ENCODE measurements at regions of chr11 and their contacts with region 1.

Region 1: DNA sequence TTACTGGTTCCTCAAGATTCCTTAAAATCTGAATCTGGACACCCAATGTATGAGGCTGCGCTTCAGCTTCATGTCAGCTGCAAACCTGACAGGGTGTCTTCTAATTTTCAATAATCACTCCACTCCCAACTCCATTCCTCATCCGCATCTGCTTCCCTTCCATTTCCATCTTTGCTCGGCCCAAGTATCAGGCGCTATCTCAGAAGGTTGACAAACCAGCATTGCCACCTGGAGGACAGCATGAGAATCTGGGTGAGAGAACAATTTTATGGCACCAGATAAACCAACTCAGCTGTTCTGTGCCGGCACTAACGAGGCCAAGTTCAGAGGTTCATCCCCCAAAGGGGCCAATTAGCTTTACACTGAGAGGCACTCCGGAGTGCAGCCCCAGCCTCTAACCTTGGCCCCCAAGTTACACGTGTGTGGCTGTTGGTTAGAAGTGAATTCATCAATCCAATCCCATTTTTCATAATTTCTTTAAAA is 79.1 kb upstream of the LMO2 start:
- DNase-seq: peak; percentile 96
- H3K4me3 ChIP-seq: no peak overlapping the region
- H3K27ac ChIP-seq: peak overlapping the region; percentile 31
- H3K4me1 ChIP-seq: peaks cover 26% of the 10 kb centered on the region
- H3K27me3 ChIP-seq: no peaks in the 10 kb centered on the region
- CTCF ChIP-seq: peak; percentile 99

Region 2: GRCh38 chr11:33280411-33280810 is 690.6 kb before region 1 on chr11:
- CTCF ChIA-PET with region 1: no interaction called
- POLR2A ChIA-PET with region 1: no interaction called
- intact Hi-C with region 1: no loop called
- DNase-seq: no peak
- H3K4me3 ChIP-seq: no peak overlapping the region
- H3K27ac ChIP-seq: no peak overlapping the region
- H3K4me1 ChIP-seq: no peaks in the 10 kb centered on the region
- H3K27me3 ChIP-seq: no peaks in the 10 kb centered on the region
- CTCF ChIP-seq: no peak

Region 3: GRCh38 chr11:33835143-33835878 is 135.7 kb before region 1 on chr11:
- CTCF ChIA-PET with region 1: interaction called, 12 read pairs
- POLR2A ChIA-PET with region 1: no interaction called
- intact Hi-C with region 1: loop called (anchors 1 kb)
- DNase-seq: peak; percentile 89
- H3K4me3 ChIP-seq: peak overlapping the region; percentile 24
- H3K27ac ChIP-seq: peak overlapping the region; percentile 57
- H3K4me1 ChIP-seq: peaks cover 39% of the 10 kb centered on the region
- H3K27me3 ChIP-seq: no peaks in the 10 kb centered on the region
- CTCF ChIP-seq: peak; percentile 86

Region 4: DNA sequence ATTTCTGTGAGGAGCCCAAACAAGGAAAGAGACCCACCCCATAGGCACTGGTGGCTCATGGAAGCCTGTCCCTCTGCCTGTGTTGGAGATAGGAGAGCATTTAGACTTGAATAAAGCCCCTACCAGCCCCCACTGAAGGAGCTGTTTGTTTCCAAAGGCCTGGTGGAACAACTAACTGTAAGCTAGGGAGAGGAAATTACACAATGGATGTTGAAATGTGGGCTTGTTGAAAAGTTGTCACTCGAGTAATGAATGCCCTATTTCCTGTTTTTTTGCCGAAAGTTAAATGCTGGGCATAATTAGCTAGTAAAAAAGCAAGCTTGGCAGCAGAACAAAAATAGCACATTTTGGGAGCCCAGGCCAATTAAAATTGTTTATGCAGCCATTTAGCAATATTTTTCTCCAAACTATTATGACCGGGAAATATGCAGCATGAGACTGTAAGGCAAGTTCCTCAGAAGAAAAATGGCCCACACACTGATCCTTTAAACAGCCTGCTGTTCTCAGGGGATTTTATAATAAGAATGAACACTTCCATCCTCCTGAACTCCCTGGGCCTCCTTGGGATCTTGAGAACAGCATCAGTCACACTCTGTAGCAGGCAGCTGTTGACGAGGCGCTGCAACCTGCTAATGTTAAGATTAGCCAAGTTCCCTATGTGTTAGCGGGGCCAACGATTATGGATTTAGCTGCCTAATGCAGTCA is 40.6 kb before region 1 on chr11:
- CTCF ChIA-PET with region 1: interaction called, 4 read pairs
- POLR2A ChIA-PET with region 1: interaction called, 11 read pairs
- intact Hi-C with region 1: no loop called
- DNase-seq: peak; percentile 100
- H3K4me3 ChIP-seq: peak overlapping the region; percentile 11
- H3K27ac ChIP-seq: peak overlapping the region; percentile 84
- H3K4me1 ChIP-seq: peaks cover 34% of the 10 kb centered on the region
- H3K27me3 ChIP-seq: no peaks in the 10 kb centered on the region
- CTCF ChIP-seq: no peak

Region 5: DNA sequence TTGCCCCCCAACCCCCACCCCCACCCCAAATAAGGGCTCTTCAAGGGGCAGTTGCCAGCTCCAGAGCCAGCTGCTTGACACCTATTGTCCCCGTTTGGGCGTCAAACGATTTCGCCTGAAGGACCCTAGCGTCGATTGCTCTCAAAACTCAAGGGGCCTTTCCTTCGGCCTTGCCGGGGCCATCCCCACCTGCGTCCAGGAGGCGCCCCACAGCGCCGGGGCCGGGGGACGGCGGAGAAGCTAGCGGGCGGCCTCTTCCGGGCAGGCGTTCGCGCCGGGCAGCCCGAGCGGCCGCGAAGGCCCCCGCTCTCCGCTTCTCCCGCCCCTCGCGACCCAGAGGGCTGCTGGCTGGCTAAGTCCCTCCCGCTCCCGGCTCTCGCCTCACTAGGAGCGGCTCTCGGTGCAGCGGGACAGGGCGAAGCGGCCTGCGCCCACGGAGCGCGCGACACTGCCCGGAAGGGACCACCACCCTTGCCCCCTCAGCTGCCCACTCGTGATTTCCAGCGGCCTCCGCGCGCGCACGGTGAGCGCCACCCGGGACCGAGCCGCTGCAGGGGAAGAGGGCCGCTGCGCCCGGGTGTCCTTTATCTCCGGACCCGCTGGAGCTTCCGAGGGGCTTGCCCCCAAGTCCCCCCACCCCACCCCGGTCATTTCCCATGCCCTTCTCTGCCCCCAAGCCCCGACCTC is 80.5 kb after region 1 on chr11 and contains the start of gene CAPRIN1:
- CTCF ChIA-PET with region 1: interaction called, 11 read pairs
- POLR2A ChIA-PET with region 1: no interaction called
- intact Hi-C with region 1: no loop called
- DNase-seq: peak; percentile 99
- H3K4me3 ChIP-seq: peak within 1 kb of the TSS; percentile 71
- H3K27ac ChIP-seq: peak within 1 kb of the TSS; percentile 99
- H3K4me1 ChIP-seq: peaks cover 61% of the 10 kb centered on the region
- H3K27me3 ChIP-seq: no peaks in the 10 kb centered on the region
- CTCF ChIP-seq: no peak
- total RNA-seq, gene CAPRIN1: 1,416 and 1,470 TPM in 2 replicates